ENCODE measurements at regions of chr2 and their contacts with region 1.

Region 1: DNA sequence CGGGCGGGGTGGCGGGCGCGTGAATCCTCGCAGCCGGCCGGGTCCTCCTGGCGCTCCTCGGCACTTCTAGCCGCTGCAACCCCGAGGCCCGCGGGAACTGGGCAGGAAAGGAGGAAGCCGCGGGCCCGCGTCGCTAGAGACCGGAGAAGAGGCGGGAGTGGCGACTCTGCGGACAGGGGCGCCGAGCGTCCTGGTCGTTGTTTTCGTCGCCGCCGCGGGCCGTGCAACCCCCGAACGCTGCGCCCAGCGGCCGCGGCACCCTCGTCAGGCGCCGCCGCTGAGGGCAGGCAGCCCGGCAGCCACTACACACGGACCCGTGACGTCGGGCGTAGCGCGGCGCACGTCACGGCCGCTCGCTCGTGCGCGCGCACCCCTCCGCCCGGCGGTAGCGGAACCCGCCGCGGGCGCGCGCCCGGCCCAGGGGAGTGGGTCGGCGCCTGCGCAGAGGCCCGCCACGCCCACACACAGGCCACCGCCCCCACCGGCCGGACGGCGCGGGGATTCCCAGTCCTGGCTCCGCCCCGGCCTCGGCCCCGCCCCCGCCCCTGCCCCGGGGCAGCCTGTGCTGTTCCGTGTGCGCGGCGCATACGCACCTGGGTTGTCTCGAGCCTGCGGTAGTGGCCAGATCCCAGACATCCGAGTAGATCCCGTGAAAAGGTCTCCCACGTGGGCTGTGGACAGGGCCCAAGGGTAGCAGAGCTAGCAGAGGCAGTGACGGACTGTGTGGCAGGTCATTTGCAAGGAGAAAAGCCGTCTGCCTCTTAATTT is at the start of gene MAP3K2:
- DNase-seq: peak; percentile 79 to 97 (median 84)

Region 2: GRCh38 chr2:127293748-127294562 is 93.9 kb before region 1 on chr2 and contains the start of gene ERCC3:
- intact Hi-C with region 1: loop called (anchors 10 kb)
- DNase-seq: peak; percentile 75 to 98 (median 88)

Region 3: GRCh38 chr2:127407661-127408003 is 19.8 kb after region 1 on chr2:
- intact Hi-C with region 1: loop called (anchors 2 kb)
- DNase-seq: no peak